ENCODE measurements at regions of chr2 and their contacts with region 1.

Region 1: GRCh38 chr2:218710687-218711549 is at the start of gene TTLL4:
- ATAC-seq: peak; percentile 90 to 98 (median 97)
- H3K4me3 ChIP-seq: peak within 1 kb of the TSS; percentile 59 to 80 (median 76)
- H3K27ac ChIP-seq: peak within 1 kb of the TSS; percentile 14 to 39
- H3K4me1 ChIP-seq: peaks cover 0 to 4% of the 10 kb centered on the region in 2 donors
- total RNA-seq, gene TTLL4: 11.1 to 78.3 (median 23.4) TPM

Region 2: DNA sequence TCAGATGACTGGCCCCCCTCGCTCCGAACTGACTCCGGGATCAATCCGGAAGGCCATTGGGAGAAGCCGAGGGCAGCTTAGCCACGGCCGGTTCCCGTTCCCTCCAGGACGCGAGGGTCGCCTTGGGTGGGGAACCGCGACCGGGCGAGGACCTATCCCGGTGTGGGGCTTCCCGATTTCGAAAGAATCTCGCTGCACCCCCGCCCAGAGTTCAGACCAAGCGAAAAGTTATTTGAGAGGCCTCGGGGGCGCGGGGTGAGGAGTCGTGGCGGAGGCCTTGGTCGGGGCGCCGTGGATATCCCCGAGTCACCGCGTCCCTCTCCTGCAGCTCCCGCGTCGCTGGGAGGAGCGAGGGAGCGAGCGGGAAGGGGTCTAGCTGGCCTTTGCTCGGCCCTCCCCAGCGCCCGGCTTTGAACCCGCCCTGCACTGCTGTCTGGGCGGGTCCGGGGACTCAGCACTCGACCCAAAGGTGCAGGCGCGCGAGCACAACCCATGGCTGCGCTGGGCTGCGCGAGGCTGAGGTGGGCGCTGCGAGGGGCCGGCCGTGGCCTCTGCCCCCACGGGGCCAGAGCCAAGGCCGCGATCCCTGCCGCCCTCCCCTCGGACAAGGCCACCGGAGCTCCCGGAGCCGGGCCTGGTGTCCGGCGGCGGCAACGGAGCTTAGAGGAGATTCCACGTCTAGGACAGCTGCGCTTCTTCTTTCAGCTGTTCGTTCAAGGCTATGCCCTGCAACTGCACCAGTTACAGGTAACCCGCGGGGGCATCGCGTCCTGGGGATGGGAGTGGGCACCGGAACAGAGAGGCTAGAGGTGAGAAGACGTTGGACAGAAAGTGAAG is 71.0 kb after region 1 on chr2 and contains the start of gene CYP27A1:
- in situ Hi-C with region 1: loop called in 1 of 9 experiments (anchors 10 kb)
- ATAC-seq: peak; percentile 68 to 91 (median 78)
- H3K4me3 ChIP-seq: peak within 1 kb of the TSS; percentile 23 to 45 (median 29)
- H3K27ac ChIP-seq: no peak within 1 kb of the TSS
- H3K4me1 ChIP-seq: peaks cover 0 to 4% of the 10 kb centered on the region in 2 donors
- total RNA-seq, gene CYP27A1: 1.0 to 104 (median 7.4) TPM

Region 3: GRCh38 chr2:218832520-218832919 is 121.6 kb after region 1 on chr2:
- in situ Hi-C with region 1: loop called in 1 of 9 experiments (anchors 25 kb)
- ATAC-seq: peak in 2 of 8 experiments; percentile 23 to 51
- H3K4me3 ChIP-seq: no peak overlapping the region
- H3K27ac ChIP-seq: no peak overlapping the region
- H3K4me1 ChIP-seq: no peaks in the 10 kb centered on the region

Region 4: GRCh38 chr2:219090436-219091299 is 379.8 kb after region 1 on chr2:
- in situ Hi-C with region 1: no loop called
- ATAC-seq: no peak
- H3K4me3 ChIP-seq: no peak overlapping the region
- H3K27ac ChIP-seq: no peak overlapping the region
- H3K4me1 ChIP-seq: no peaks in the 10 kb centered on the region

Measured in motor neuron (in vitro differentiated cells).